ENCODE measurements at regions of chr17 and their contacts with region 1.

Region 1: DNA sequence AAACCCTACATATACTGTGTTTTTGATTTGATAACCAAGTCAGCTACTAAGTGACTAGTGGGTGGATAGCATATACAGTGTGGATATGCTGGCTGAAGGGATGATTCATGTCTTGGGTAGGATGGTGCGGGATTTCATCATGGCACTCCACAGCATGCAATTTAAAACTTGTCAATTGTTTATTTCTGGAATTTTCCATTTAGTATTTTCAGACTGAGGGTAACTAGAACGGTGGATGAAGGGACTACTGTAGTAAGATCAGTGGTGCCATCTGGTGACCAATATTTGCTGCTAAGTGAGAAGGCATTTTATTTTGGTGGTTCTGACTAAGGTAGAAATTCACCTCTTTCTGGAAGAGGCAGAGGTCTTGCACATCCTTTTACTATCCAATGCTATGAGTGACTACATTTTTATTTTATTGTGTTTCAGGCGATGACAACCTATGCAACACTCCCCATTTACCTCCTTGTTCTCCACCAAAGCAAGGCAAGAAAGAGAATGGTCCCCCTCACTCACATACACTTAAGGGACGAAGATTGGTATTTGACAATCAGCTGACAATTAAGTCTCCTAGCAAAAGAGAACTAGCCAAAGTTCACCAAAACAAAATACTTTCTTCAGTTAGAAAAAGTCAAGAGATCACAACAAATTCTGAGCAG is 3.1 kb downstream of the CDC6 start:
- DNase-seq: no peak
- ATAC-seq: peak; percentile 18
- H3K4me3 ChIP-seq: no peak overlapping the region
- H3K27ac ChIP-seq: no peak overlapping the region
- H3K4me1 ChIP-seq: peaks cover 7% of the 10 kb centered on the region
- H3K27me3 ChIP-seq: no peaks in the 10 kb centered on the region
- CTCF ChIP-seq: peak; percentile 66

Region 2: GRCh38 chr17:40177275-40177874 is 113.4 kb before region 1 on chr17 and contains the start of gene RAPGEFL1:
- intact Hi-C with region 1: no loop called
- DNase-seq: peak; percentile 94
- ATAC-seq: peak; percentile 91
- H3K4me3 ChIP-seq: peak within 1 kb of the TSS; percentile 48
- H3K27ac ChIP-seq: peak within 1 kb of the TSS; percentile 45
- H3K4me1 ChIP-seq: peaks cover 23% of the 10 kb centered on the region
- H3K27me3 ChIP-seq: no peaks in the 10 kb centered on the region
- CTCF ChIP-seq: no peak
- total RNA-seq, gene RAPGEFL1: 10.2 TPM

Region 3: DNA sequence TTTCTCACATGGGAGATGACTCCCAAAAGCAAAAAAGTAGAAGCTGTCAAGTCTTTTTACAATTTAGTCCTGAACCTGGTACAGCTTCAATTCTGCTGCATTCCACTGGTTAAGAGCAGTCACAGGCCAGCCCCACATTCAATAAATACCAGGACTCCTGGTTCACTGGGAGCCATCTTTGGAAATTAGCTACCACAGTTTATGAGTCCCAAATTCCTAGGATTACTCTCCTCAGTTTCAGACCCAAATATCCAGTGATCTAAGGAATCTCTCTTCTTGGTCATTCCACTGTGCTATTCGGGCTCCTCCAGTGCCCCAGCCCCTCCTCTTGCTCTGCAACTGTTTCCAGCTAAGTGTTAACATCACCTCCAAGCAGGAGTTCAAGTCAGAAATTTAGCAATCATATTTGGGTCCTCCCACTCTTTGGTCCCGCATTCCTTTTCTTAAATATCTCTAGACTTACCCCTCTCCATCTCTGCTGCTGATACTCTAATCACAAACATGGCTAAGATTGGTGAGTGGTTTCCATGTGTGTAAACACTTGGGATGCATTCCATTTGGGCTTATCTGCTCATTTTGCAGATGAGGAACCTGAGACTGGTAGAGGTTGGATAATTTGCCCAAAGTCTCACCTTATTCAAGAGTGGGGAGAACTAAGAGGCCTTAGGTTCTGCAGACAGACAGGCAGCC is 81.2 kb before region 1 on chr17:
- intact Hi-C with region 1: loop called (anchors 10 kb)
- DNase-seq: no peak
- ATAC-seq: peak; percentile 25
- H3K4me3 ChIP-seq: no peak overlapping the region
- H3K27ac ChIP-seq: no peak overlapping the region
- H3K4me1 ChIP-seq: no peaks in the 10 kb centered on the region
- H3K27me3 ChIP-seq: no peaks in the 10 kb centered on the region
- CTCF ChIP-seq: no peak

Region 4: GRCh38 chr17:40362696-40363110 is 71.9 kb after region 1 on chr17:
- intact Hi-C with region 1: no loop called
- DNase-seq: peak; percentile 94
- ATAC-seq: peak; percentile 86
- H3K4me3 ChIP-seq: peak overlapping the region; percentile 59
- H3K27ac ChIP-seq: no peak overlapping the region
- H3K4me1 ChIP-seq: peaks cover 13% of the 10 kb centered on the region
- H3K27me3 ChIP-seq: no peaks in the 10 kb centered on the region
- CTCF ChIP-seq: peak; percentile 66

Measured in upper lobe of right lung (tissue), 1 donor.